AG04449 (cell line): ENCODE measurements at regions of chr21 and their contacts with region 1.

Region 1: DNA sequence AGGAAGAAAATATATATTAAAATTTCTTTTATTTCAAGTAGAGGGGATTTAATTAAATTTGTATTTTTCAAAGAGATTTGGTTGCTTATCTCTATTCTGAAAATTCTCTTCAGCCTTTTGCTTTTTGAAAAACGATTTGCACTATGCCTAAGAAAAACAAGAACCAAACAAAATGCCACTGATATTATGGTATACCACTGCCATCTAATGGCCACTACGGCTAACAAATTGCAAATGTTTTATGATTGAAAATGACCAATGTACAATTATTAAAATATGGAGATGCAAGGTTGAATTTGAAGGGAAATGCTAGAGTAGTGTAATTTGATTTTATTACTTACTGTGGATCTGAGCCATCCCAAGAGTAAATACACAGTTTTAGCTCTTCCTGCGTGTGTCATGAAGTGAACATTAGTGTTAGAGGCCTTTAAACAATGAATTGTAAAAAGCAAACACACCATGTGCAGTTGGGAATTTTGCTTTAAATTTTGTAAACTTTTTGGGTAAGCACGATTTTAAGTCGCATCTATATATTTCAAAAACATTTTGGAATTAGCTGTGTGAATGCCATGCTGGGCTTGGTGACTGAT is 137.4 kb upstream of the USP25 start:
- DNase-seq: no peak
- H3K4me3 ChIP-seq: no peak overlapping the region
- CTCF ChIP-seq: peak; percentile 33

Region 2: GRCh38 chr21:14259747-14260146 is 1332.6 kb before region 1 on chr21:
- CTCF ChIA-PET with region 1: interaction called, 25 read pairs
- POLR2A ChIA-PET with region 1: no interaction called
- DNase-seq: peak; percentile 5
- H3K4me3 ChIP-seq: no peak overlapping the region
- CTCF ChIP-seq: peak; percentile 32